ENCODE measurements at regions of chr16 and their contacts with region 1.

Region 1: GRCh38 chr16:12531937-12532336 is 271.8 kb downstream of the CPPED1 start:
- DNase-seq: no peak

Region 2: DNA sequence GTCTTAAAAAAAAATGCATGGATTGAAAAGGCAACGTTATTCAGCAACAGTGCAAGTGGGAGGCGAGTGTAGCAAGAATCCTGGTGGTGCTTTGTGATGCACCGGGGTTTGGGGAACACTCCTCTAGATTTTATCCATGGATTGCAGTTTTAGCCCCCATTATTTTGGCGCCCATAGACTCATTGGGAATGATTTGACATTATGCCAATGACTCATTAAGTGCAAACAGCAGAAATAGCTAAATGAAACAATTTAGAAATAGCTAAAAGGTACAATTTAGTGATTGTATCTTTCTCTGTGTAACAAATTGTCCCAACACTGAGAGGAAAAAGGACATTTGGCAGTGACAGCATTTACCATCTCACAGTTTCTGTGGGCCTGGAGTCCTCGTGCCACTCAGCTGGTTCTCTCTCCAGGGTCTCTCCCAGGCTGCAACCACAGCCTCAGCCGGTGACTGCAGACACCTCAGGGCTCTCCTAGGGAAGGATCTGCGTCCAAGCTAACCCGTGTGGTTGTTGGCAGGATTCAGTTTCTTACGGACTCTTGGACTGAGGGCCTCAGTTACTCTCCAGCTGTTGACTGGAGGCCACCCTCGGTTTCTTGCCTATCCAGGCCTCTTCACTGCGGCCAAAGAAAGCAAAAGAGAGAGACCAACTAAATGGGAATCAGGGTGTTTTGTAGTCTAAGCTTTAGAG is 156.7 kb before region 1 on chr16:
- intact Hi-C with region 1: loop called in 1 of 2 experiments (anchors 10 kb)
- DNase-seq: no peak

Region 3: DNA sequence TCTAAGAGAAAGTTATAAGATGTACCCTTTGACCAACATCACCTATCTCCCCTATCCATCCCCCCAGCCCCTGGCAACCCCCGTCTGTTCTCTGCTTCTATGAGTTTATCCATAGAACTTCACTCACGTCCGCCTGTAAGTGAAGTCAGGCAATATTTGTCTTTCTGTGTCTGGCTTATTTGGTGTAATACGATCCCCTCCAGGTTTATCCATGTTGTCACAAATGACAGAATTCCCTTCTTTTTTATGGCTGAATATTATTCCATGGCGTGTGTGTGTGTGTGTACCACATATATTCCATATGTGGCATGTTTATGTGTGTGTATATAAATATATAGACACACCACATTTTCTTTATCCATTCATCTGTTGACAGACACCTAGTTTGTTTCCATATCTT is 68.0 kb before region 1 on chr16:
- intact Hi-C with region 1: loop called in 1 of 2 experiments (anchors 2 kb)
- DNase-seq: peak; percentile 19

Measured in posterior vena cava (tissue), 2 donors.